GM13976 (cell line): ENCODE measurements at regions of chr2 and their contacts with region 1.

Region 1: GRCh38 chr2:233026192-233026813 is 6.2 kb upstream of the NEU2 start:
- DNase-seq: no peak
- CTCF ChIP-seq: no peak

Region 2: GRCh38 chr2:232611551-232612218 is 414.6 kb before region 1 on chr2:
- in situ Hi-C with region 1: loop called (anchors 25 kb)
- DNase-seq: peak; percentile 77
- CTCF ChIP-seq: peak; percentile 86